ENCODE measurements at regions of chr6 and their contacts with region 1.

Region 1: GRCh38 chr6:137944793-137945498 is 77.9 kb downstream of the TNFAIP3 start:
- DNase-seq: no peak
- ATAC-seq: peak; percentile 72
- H3K4me3 ChIP-seq: peak overlapping the region; percentile 37; the same call in 1 of the 2 replicates
- H3K27ac ChIP-seq: peak overlapping the region; percentile 42
- H3K4me1 ChIP-seq: peaks cover 37% of the 10 kb centered on the region
- H3K27me3 ChIP-seq: no peaks in the 10 kb centered on the region
- CTCF ChIP-seq: peak; percentile 75 to 80 (median 75)
- EP300 ChIP-seq: no peak
- POLR2A ChIP-seq: no peak
- RAD21 ChIP-seq: peak; percentile 83

Region 2: GRCh38 chr6:137387096-137387764 is 557.7 kb before region 1 on chr6:
- CTCF ChIA-PET with region 1: no interaction called
- POLR2A ChIA-PET with region 1: no interaction called
- RAD21 ChIA-PET with region 1: no interaction called
- SMC1A ChIA-PET with region 1: no interaction called
- in situ Hi-C with region 1: no loop called
- intact Hi-C with region 1: no loop called
- DNase-seq: no peak
- ATAC-seq: no peak
- H3K4me3 ChIP-seq: no peak overlapping the region
- H3K27ac ChIP-seq: no peak overlapping the region
- H3K4me1 ChIP-seq: peaks cover 18% of the 10 kb centered on the region
- H3K27me3 ChIP-seq: no peaks in the 10 kb centered on the region
- CTCF ChIP-seq: no peak
- EP300 ChIP-seq: no peak
- POLR2A ChIP-seq: no peak
- RAD21 ChIP-seq: no peak

Region 3: GRCh38 chr6:137443901-137444300 is 501.0 kb before region 1 on chr6:
- CTCF ChIA-PET with region 1: no interaction called
- POLR2A ChIA-PET with region 1: no interaction called
- RAD21 ChIA-PET with region 1: no interaction called
- SMC1A ChIA-PET with region 1: no interaction called
- in situ Hi-C with region 1: no loop called
- intact Hi-C with region 1: no loop called
- DNase-seq: no peak
- ATAC-seq: no peak
- H3K4me3 ChIP-seq: no peak overlapping the region
- H3K27ac ChIP-seq: no peak overlapping the region
- H3K4me1 ChIP-seq: no peaks in the 10 kb centered on the region
- H3K27me3 ChIP-seq: no peaks in the 10 kb centered on the region; a peak in 1 of 4 replicates
- CTCF ChIP-seq: no peak
- EP300 ChIP-seq: no peak
- POLR2A ChIP-seq: no peak
- RAD21 ChIP-seq: no peak

Region 4: DNA sequence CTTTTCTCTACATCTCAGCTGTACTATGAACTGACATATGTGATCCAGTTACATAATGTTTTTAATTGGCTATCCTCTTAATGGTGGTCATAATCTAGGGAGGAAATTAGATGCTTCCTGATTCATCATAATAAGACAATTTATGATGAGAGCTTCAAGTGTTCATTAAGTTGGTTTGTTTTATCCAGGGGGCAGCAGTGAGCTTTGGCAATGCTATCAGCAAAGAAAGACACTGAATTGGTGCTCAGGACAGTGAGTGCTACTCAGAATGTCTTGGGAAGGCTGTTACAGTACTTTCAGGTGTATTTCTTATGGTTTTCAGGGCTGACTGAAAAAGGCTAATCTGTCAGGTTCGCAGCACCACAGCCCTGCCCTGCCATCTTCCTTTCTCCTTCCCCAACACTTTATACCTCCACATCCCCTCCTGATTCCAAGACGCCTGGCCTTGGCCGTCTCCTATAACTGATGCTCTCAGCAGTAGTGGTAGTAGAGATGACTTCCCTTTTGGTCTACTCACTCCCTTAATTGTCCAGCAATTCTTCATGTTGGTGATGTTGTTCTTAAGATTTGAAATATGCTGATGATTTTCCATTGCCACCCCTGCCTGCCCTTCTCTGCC is 144.9 kb before region 1 on chr6:
- CTCF ChIA-PET with region 1: interaction called, 34 read pairs
- POLR2A ChIA-PET with region 1: interaction called, 3 read pairs
- RAD21 ChIA-PET with region 1: interaction called, 24 read pairs
- SMC1A ChIA-PET with region 1: interaction called, 28 read pairs
- in situ Hi-C with region 1: loop called (anchors 5 kb)
- intact Hi-C with region 1: loop called (anchors 5 kb)
- DNase-seq: no peak
- ATAC-seq: peak; percentile 96
- H3K4me3 ChIP-seq: no peak overlapping the region
- H3K27ac ChIP-seq: no peak overlapping the region
- H3K4me1 ChIP-seq: peaks cover 19% of the 10 kb centered on the region
- H3K27me3 ChIP-seq: no peaks in the 10 kb centered on the region
- CTCF ChIP-seq: peak; percentile 67 to 78 (median 70)
- EP300 ChIP-seq: no peak
- POLR2A ChIP-seq: no peak
- RAD21 ChIP-seq: peak; percentile 88

Region 5: DNA sequence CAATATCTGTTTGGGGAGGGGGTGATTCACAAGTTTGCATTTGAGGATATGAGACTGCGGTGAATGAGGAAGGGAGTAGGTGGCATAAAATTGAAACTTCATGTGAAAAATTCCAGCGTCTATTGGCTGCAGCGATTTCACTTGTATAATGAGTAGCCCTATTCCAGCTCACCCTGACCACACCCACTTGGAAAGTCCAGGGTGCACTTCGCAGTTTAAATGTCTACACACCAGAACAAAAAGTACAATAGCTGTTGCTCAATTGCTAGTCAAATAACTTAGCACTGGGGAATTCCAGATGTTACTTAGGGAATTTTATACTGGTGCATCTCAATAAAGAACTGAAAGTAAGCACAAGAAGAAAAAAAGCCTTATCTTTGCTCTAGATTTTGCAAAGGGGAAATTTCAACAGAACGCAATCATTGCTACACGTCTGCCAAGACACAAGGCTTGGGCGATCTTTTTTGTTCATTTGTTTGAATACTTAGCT is 71.6 kb before region 1 on chr6:
- CTCF ChIA-PET with region 1: interaction called, 712 read pairs
- POLR2A ChIA-PET with region 1: interaction called, 42 read pairs
- RAD21 ChIA-PET with region 1: interaction called, 774 read pairs
- SMC1A ChIA-PET with region 1: interaction called, 1,237 read pairs
- in situ Hi-C with region 1: loop called (anchors 5 kb)
- intact Hi-C with region 1: loop called (anchors 1 kb)
- DNase-seq: peak; percentile 95
- ATAC-seq: peak; percentile 54
- H3K4me3 ChIP-seq: peak overlapping the region; percentile 99
- H3K27ac ChIP-seq: peak overlapping the region; percentile 88
- H3K4me1 ChIP-seq: no peaks in the 10 kb centered on the region
- H3K27me3 ChIP-seq: no peaks in the 10 kb centered on the region
- CTCF ChIP-seq: no peak
- EP300 ChIP-seq: peak; percentile 62 to 64; a peak in 2 of 4 replicates
- POLR2A ChIP-seq: 0 out of 2 replicates have a peak, but pooled peaks have one; percentile 27
- RAD21 ChIP-seq: no peak

Region 6: GRCh38 chr6:137910424-137910834 is 34.5 kb before region 1 on chr6:
- CTCF ChIA-PET with region 1: interaction called, 71 read pairs
- POLR2A ChIA-PET with region 1: interaction called, 28 read pairs
- RAD21 ChIA-PET with region 1: interaction called, 45 read pairs
- SMC1A ChIA-PET with region 1: interaction called, 102 read pairs
- in situ Hi-C with region 1: no loop called
- intact Hi-C with region 1: loop called (anchors 1 kb)
- DNase-seq: no peak
- ATAC-seq: no peak
- H3K4me3 ChIP-seq: no peak overlapping the region
- H3K27ac ChIP-seq: peak overlapping the region; percentile 95
- H3K4me1 ChIP-seq: peaks cover 48% of the 10 kb centered on the region
- H3K27me3 ChIP-seq: no peaks in the 10 kb centered on the region
- CTCF ChIP-seq: no peak
- EP300 ChIP-seq: no peak
- POLR2A ChIP-seq: no peak
- RAD21 ChIP-seq: no peak

Region 7: GRCh38 chr6:137933696-137934095 is 11.2 kb before region 1 on chr6:
- CTCF ChIA-PET with region 1: interaction called, 28 read pairs
- POLR2A ChIA-PET with region 1: interaction called, 6 read pairs
- RAD21 ChIA-PET with region 1: interaction called, 38 read pairs
- SMC1A ChIA-PET with region 1: interaction called, 33 read pairs
- in situ Hi-C with region 1: no loop called
- intact Hi-C with region 1: no loop called
- DNase-seq: no peak
- ATAC-seq: no peak
- H3K4me3 ChIP-seq: no peak overlapping the region
- H3K27ac ChIP-seq: peak overlapping the region; percentile 53
- H3K4me1 ChIP-seq: peaks cover 28% of the 10 kb centered on the region
- H3K27me3 ChIP-seq: no peaks in the 10 kb centered on the region
- CTCF ChIP-seq: no peak
- EP300 ChIP-seq: no peak
- POLR2A ChIP-seq: no peak
- RAD21 ChIP-seq: no peak

Region 8: GRCh38 chr6:137975188-137975940 is 30.4 kb after region 1 on chr6:
- CTCF ChIA-PET with region 1: interaction called, 161 read pairs
- POLR2A ChIA-PET with region 1: interaction called, 8 read pairs
- RAD21 ChIA-PET with region 1: interaction called, 69 read pairs
- SMC1A ChIA-PET with region 1: interaction called, 57 read pairs
- in situ Hi-C with region 1: no loop called
- intact Hi-C with region 1: loop called (anchors 2 kb)
- DNase-seq: peak; percentile 53
- ATAC-seq: peak; percentile 67
- H3K4me3 ChIP-seq: peak overlapping the region; percentile 1; the same call in 1 of the 2 replicates
- H3K27ac ChIP-seq: peak overlapping the region; percentile 34
- H3K4me1 ChIP-seq: peaks cover 36% of the 10 kb centered on the region
- H3K27me3 ChIP-seq: no peaks in the 10 kb centered on the region
- CTCF ChIP-seq: peak; percentile 23 to 62 (median 44); a peak in 5 of 6 replicates
- EP300 ChIP-seq: no peak
- POLR2A ChIP-seq: no peak
- RAD21 ChIP-seq: peak; percentile 81